ENCODE measurements at regions of chr19 and their contacts with region 1.

Region 1: DNA sequence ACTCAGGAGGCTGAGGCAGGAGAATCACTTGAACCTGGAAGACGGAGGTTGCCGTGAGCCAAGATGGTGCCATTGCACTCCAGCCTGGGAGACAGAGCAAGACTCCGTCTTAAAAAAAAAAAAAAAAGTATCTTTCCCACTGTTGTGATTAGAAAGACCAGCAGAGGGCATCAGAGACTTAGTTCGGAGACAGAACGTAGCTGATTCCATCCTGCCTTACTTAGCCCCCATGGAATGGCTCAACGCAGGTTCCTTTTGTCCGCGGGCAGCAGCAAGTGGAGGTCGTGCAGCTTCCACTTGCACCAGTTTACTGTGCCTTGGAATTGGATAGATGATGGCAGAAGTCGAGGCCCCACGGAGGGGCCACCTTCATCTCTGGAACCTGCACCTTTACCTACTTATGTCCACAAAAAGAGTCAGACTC is 8.1 kb downstream of the TIMM29 start:
- DNase-seq: peak; percentile 83
- H3K4me3 ChIP-seq: peak overlapping the region in 1 of 2 experiments; percentile 40; a peak in 1 of 4 replicates
- H3K27ac ChIP-seq: peak overlapping the region in 1 of 2 experiments; percentile 51; a peak in 1 of 4 replicates
- H3K4me1 ChIP-seq: peaks cover 0 to 8% of the 10 kb centered on the region in 2 experiments; a peak in 2 of 4 replicates
- H3K27me3 ChIP-seq: no peaks in the 10 kb centered on the region
- CTCF ChIP-seq: peak; percentile 75
- EP300 ChIP-seq: no peak
- RAD21 ChIP-seq: peak; percentile 82

Region 2: GRCh38 chr19:10736916-10737551 is 199.6 kb before region 1 on chr19:
- CTCF ChIA-PET with region 1: no interaction called
- POLR2A ChIA-PET with region 1: no interaction called
- DNase-seq: no peak
- H3K4me3 ChIP-seq: no peak overlapping the region
- H3K27ac ChIP-seq: no peak overlapping the region
- H3K4me1 ChIP-seq: no peaks in the 10 kb centered on the region; a peak in 1 of 4 replicates
- H3K27me3 ChIP-seq: no peaks in the 10 kb centered on the region
- CTCF ChIP-seq: no peak
- EP300 ChIP-seq: no peak
- RAD21 ChIP-seq: no peak

Region 3: DNA sequence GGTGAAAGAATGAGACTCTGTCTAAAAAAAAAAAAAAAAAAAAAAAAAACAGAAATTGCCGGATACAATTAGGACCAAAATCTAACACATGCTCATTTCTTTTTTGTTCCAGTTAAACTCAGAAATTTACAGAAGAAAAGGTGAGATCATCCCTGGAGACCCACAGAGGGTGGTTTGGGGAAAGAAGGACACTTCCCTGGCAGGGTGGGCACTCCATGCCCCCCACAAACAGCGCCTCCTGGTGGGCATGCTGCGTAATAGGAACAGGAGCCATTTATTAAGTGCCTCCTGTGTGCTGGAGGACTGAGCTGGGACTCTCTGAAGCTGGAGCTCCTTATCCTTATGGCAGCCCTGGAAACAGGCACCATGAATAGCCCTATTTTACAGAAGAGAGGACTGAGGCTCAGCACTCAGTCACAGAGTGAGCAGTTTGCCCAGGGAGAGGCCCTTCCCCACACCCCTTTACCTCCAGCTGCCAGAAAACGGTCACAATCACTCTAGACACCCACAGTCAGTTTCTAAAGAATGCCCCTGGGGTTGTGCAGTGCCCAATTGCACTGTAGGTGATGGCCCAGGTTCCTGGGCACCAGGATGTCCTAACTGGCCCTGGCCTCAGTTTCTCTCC is 78.4 kb before region 1 on chr19:
- CTCF ChIA-PET with region 1: no interaction called
- POLR2A ChIA-PET with region 1: no interaction called
- DNase-seq: peak; percentile 69
- H3K4me3 ChIP-seq: peak overlapping the region in 1 of 2 experiments; percentile 52; a peak in 1 of 4 replicates
- H3K27ac ChIP-seq: no peak overlapping the region
- H3K4me1 ChIP-seq: no peaks in the 10 kb centered on the region
- H3K27me3 ChIP-seq: no peaks in the 10 kb centered on the region
- CTCF ChIP-seq: peak; percentile 95
- EP300 ChIP-seq: no peak
- RAD21 ChIP-seq: peak; percentile 47

Region 4: GRCh38 chr19:10960314-10961072 is 23.8 kb after region 1 on chr19 and contains the start of gene SMARCA4:
- CTCF ChIA-PET with region 1: interaction called, 27 read pairs
- POLR2A ChIA-PET with region 1: interaction called, 4 read pairs
- DNase-seq: peak; percentile 100
- H3K4me3 ChIP-seq: peak within 1 kb of the TSS; percentile 66 to 76
- H3K27ac ChIP-seq: peak within 1 kb of the TSS; percentile 58 to 79
- H3K4me1 ChIP-seq: peaks cover 0 to 9% of the 10 kb centered on the region in 2 experiments; a peak in 2 of 4 replicates
- H3K27me3 ChIP-seq: no peaks in the 10 kb centered on the region
- CTCF ChIP-seq: no peak
- EP300 ChIP-seq: no peak
- RAD21 ChIP-seq: no peak
- polyA plus RNA-seq, gene SMARCA4: 48.3 and 90.7 TPM in 2 replicates

Region 5: DNA sequence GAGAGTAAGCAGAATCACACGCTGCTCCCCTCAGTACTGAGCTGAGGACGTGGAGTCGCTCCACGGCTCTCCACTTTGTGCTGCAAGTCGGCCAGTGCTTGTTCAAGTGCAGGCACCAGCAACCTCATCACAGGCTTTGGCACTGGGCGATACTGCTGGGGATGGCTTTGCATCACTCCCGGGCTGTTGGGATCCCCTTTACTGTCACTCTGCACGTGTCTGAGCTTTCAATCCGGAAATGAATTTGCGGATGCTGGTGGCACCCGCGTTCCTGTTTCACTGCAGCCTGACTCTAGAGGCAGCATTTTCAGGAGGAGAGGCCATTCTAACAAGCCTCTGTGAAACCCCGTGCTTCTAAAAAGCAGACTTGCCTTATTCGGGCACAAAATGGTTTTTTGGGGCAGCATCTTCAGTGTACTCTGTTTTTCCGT is 43.3 kb after region 1 on chr19:
- CTCF ChIA-PET with region 1: interaction called, 10 read pairs
- POLR2A ChIA-PET with region 1: no interaction called
- DNase-seq: no peak
- H3K4me3 ChIP-seq: no peak overlapping the region
- H3K27ac ChIP-seq: no peak overlapping the region
- H3K4me1 ChIP-seq: peaks cover 5 to 7% of the 10 kb centered on the region in 2 experiments; a peak in 2 of 4 replicates
- H3K27me3 ChIP-seq: no peaks in the 10 kb centered on the region
- CTCF ChIP-seq: no peak
- EP300 ChIP-seq: no peak
- RAD21 ChIP-seq: no peak

Region 6: GRCh38 chr19:11005521-11005920 is 68.8 kb after region 1 on chr19:
- CTCF ChIA-PET with region 1: interaction called, 13 read pairs
- POLR2A ChIA-PET with region 1: interaction called, 3 read pairs
- DNase-seq: no peak
- H3K4me3 ChIP-seq: no peak overlapping the region
- H3K27ac ChIP-seq: no peak overlapping the region
- H3K4me1 ChIP-seq: no peaks in the 10 kb centered on the region
- H3K27me3 ChIP-seq: no peaks in the 10 kb centered on the region
- CTCF ChIP-seq: no peak
- EP300 ChIP-seq: no peak
- RAD21 ChIP-seq: no peak

Region 7: DNA sequence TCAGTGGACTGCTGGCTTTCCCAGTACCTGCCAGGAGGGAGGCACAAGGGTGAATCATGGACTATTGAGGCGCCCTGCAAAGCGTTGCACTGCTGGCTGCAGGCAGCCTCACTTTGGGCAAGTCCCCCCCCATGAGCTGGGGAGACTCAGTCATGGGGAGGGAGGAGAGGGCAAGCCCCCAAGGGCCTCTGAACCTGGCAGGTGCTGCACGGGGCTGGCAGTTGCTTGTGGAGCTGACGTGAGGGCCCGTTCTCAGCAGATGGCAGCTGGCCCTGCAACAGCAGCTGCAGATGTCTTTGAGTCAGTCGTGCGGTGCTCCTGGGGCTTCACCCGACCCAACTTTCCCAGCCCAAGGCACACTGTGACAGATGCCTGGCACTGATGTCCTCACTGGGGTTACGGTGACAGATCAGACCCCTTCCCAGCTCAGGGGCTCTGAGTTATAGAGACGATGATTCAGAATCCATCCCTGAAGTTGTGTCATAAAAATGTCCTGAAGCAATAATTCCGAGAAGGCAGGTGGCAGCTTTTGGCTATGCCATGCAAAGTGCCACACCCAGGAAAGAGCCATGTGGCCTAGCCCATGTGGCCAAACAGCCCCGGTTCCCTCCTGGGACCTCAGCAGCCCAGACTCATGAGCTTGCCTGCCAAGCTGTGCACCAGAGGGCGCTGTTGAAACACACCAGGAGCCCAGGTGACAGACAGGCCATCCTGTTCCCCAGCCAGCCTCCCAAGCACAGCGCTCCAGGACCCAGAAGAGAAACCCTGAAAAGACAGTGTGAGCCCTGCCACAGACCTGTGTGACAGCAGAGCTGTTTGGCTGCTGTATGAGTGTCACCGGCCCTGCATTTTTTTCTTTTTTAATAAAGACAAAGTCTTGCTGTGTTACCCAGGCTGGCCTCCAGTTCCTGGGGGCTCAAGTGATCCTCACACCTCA is 99.0 kb after region 1 on chr19:
- CTCF ChIA-PET with region 1: interaction called, 27 read pairs
- POLR2A ChIA-PET with region 1: no interaction called
- DNase-seq: peak; percentile 92
- H3K4me3 ChIP-seq: peak overlapping the region in 1 of 2 experiments; percentile 14; a peak in 1 of 4 replicates
- H3K27ac ChIP-seq: no peak overlapping the region
- H3K4me1 ChIP-seq: no peaks in the 10 kb centered on the region
- H3K27me3 ChIP-seq: no peaks in the 10 kb centered on the region
- CTCF ChIP-seq: peak; percentile 81
- EP300 ChIP-seq: no peak
- RAD21 ChIP-seq: peak; percentile 80

Region 8: DNA sequence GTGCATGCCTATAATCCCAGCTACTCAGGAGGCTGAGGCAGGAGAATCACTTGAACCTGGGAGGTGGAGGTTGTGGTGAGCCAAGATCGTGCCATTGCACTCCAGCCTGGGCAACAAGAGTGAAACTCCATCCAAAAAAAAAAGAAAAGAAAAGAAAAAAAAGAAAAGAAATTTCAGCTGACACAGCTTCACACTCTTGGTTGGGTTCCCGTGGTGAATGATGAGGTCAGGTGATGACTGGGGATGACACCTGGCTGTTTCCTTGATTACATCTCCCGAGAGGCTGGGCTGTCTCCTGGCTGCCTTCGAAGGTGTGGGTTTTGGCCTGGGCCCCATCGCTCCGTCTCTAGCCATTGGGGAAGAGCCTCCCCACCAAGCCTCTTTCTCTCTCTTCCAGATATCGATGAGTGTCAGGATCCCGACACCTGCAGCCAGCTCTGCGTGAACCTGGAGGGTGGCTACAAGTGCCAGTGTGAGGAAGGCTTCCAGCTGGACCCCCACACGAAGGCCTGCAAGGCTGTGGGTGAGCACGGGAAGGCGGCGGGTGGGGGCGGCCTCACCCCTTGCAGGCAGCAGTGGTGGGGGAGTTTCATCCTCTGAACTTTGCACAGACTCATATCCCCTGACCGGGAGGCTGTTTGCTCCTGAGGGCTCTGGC is 174.6 kb after region 1 on chr19:
- CTCF ChIA-PET with region 1: no interaction called
- POLR2A ChIA-PET with region 1: no interaction called
- DNase-seq: no peak
- H3K4me3 ChIP-seq: no peak overlapping the region
- H3K27ac ChIP-seq: no peak overlapping the region
- H3K4me1 ChIP-seq: peaks cover 0 to under 1% of the 10 kb centered on the region in 2 experiments; a peak in 1 of 4 replicates
- H3K27me3 ChIP-seq: no peaks in the 10 kb centered on the region
- CTCF ChIP-seq: no peak
- EP300 ChIP-seq: no peak
- RAD21 ChIP-seq: no peak

Measured in SK-N-SH (cell line).